Gastrocnemius medialis (tissue), 4 donors: ENCODE measurements at regions of chr16 and their contacts with region 1.

Region 1: DNA sequence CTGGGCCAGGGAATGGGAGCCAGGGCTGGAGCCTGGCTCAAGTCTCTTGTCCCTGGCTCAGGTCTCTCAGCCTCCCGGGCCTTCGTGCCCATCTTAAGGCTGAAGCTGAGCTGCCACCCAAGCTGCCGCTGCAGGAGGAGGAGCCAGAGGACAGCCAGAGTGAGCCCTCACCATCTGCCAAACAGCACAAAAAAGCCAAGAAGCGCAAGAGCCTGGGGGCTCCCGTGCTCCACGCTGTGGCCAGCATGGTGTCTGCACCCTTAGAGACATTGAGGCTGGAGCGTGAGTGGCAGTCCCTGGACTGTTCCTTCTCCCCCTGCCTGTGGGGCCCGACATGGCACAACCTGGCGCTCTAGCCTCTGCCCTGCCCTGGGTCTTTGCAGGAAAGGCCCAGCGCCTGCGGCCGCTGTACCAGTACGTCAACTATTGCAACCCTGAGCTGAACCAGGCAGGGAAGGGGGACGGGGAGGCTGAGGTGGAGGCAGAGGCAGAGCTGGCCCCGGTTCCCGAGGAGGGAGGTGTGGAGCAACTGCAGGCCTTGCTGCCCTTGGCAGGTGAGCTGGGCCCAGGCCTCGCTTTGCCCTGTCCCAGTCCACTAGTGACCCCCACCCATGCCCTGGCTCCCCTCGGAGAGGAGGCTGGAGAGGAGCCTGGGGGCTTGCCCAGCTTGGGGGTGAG is 1.3 kb downstream of the C16orf86 start:
- DNase-seq: peak; percentile 85 to 90
- ATAC-seq: peak; percentile 75 to 87
- H3K4me3 ChIP-seq: peak overlapping the region; percentile 75 to 91 (median 86)
- H3K27ac ChIP-seq: peak overlapping the region; percentile 86 to 92 (median 92)
- H3K4me1 ChIP-seq: peaks cover 19 to 28% of the 10 kb centered on the region in 2 donors
- H3K27me3 ChIP-seq: no peaks in the 10 kb centered on the region
- CTCF ChIP-seq: peak; percentile 87 to 91 (median 90)
- POLR2A ChIP-seq: no peak

Region 2: GRCh38 chr16:67183627-67184328 is 484.2 kb before region 1 on chr16 and contains the start of gene MATCAP1:
- in situ Hi-C with region 1: no loop called
- intact Hi-C with region 1: no loop called
- DNase-seq: peak; percentile 95 to 97
- ATAC-seq: peak; percentile 93 to 96
- H3K4me3 ChIP-seq: peak within 1 kb of the TSS; percentile 65 to 88 (median 70)
- H3K27ac ChIP-seq: peak within 1 kb of the TSS; percentile 85 to 97 (median 95)
- H3K4me1 ChIP-seq: peaks cover 16 to 31% of the 10 kb centered on the region in 2 donors
- H3K27me3 ChIP-seq: no peaks in the 10 kb centered on the region
- CTCF ChIP-seq: no peak
- POLR2A ChIP-seq: peak; percentile 61 to 63
- total RNA-seq, gene MATCAP1: 2.5 to 7.7 (median 4.5) TPM

Region 3: DNA sequence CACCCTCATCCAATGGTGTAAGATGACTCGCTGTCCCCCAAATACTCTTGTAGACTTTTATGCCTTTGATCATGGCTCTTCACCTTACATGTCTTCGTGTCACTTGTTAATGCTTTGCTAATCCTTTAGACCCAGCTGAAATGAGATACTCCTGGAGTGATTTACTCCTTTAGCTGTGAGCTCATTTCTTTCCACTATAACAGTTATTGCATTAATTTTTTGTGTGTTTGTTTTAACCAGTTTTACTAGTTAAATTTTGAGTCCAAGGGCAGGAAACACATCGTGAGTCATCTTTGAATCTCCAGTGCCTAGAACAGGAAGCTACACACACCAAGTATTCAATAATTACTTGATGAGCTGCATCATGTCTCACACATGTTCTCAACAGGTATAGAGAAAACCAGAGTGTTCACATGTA is 112.2 kb before region 1 on chr16:
- in situ Hi-C with region 1: loop called in 2 of 4 experiments (anchors 10 kb)
- intact Hi-C with region 1: no loop called
- DNase-seq: no peak
- ATAC-seq: no peak
- H3K4me3 ChIP-seq: no peak overlapping the region
- H3K27ac ChIP-seq: peak overlapping the region in 3 of 4 donors; percentile 12 to 36 (median 33)
- H3K4me1 ChIP-seq: peaks cover 29 to 30% of the 10 kb centered on the region in 2 donors
- H3K27me3 ChIP-seq: no peaks in the 10 kb centered on the region
- CTCF ChIP-seq: no peak
- POLR2A ChIP-seq: no peak